Psoas muscle (tissue), 8 donors: ENCODE measurements at regions of chr9 and their contacts with region 1.

Region 1: GRCh38 chr9:121984726-121985402 is 108.2 kb downstream of the TTLL11 start:
- DNase-seq: peak in 1 of 2 donors; percentile 47
- ATAC-seq: peak; percentile 83 to 90 (median 89)
- H3K4me3 ChIP-seq: no peak overlapping the region
- H3K27ac ChIP-seq: peak overlapping the region; percentile 90
- H3K4me1 ChIP-seq: peaks cover 58% of the 10 kb centered on the region
- H3K27me3 ChIP-seq: no peaks in the 10 kb centered on the region
- CTCF ChIP-seq: no peak

Region 2: DNA sequence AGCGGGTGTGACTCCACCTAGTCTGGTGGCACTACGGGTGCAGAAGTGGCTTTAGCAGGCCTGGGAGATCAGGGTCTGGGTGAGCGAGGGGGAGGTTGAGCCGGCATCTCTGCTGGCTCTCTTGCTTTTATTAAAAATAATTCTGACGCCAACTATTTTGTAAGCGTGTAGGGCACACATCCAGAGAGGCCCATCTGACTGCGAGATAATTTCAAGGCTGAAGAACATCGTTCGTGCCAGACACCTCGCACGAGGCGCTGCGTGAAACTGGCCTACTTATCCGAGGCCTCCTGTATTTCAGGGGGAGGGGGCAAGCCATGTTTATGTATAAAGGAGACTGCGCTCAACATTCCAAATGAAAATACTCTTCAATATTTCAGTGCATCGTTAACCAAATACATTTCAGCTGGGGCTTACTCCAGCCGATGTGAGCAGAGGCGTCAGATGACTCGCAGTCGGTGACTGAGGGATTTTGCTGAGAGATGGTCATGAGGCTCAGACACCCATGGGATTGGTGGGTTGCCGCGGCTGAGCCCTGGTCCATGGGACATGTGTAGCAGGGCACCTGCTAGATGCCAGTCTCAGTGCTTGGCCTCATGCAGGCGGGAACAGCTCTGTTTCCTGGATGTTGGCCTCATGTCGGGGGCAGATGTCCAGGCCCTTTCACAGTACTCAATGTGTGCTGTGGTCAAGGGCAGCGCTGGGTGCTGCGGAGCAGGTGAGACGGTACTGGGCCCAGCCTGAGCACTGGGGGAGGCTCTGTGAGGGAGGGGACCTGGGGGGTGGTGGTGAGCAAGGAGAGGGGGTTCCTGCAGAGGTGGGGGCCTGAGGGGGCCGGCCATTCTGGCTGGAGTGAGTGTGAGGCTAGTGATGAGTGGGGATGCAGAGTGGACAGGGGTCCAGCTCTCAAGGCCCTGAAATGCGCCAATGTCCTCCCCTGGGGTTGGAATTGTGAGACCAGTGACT is 131.9 kb before region 1 on chr9:
- intact Hi-C with region 1: no loop called
- DNase-seq: peak; percentile 72 to 80
- ATAC-seq: peak; percentile 92 to 96 (median 94)
- H3K4me3 ChIP-seq: no peak overlapping the region
- H3K27ac ChIP-seq: peak overlapping the region; percentile 48
- H3K4me1 ChIP-seq: peaks cover 12% of the 10 kb centered on the region
- H3K27me3 ChIP-seq: no peaks in the 10 kb centered on the region
- CTCF ChIP-seq: no peak

Region 3: GRCh38 chr9:121895818-121896544 is 88.9 kb before region 1 on chr9:
- intact Hi-C with region 1: loop called in 1 of 2 experiments (anchors 5 kb)
- DNase-seq: no peak
- ATAC-seq: peak; percentile 27 to 63 (median 47)
- H3K4me3 ChIP-seq: no peak overlapping the region
- H3K27ac ChIP-seq: peak overlapping the region; percentile 41
- H3K4me1 ChIP-seq: peaks cover 9% of the 10 kb centered on the region
- H3K27me3 ChIP-seq: no peaks in the 10 kb centered on the region
- CTCF ChIP-seq: no peak